H1 (cell line): ENCODE measurements at regions of chr16 and their contacts with region 1.

Region 1: DNA sequence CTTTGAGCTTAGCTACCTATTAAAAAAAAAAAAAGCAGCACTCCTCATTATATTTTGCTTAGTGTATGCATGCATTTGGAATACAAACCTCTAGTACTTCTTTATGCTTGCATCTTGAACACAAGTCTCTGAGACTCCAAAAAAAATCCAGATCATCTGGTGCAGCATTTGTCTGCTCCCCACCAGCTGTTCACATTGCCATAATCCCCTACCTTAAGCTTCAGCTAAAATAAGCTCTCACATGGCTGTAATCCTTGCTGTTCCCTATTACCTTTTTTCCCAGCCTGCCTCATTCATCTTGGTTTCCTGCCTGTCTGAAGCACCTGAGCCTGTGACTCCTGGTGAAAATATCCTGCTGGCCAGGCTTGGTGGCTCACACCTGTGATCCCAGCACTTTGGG is 7.5 kb upstream of the NFATC2IP start:
- DNase-seq: no peak
- H3K4me3 ChIP-seq: no peak overlapping the region
- H3K27ac ChIP-seq: no peak overlapping the region
- H3K4me1 ChIP-seq: peaks cover 0 to 5% (median 1%) of the 10 kb centered on the region in 4 experiments; a peak in 3 of 7 replicates
- H3K27me3 ChIP-seq: no peaks in the 10 kb centered on the region
- CTCF ChIP-seq: no peak
- EP300 ChIP-seq: no peak
- POLR2A ChIP-seq: no peak
- RAD21 ChIP-seq: no peak

Region 2: GRCh38 chr16:28846080-28846932 is 97.0 kb before region 1 on chr16 and contains the start of gene TUFM:
- CTCF ChIA-PET with region 1: interaction called, 16 read pairs
- POLR2A ChIA-PET with region 1: interaction called, 4 read pairs
- DNase-seq: peak; percentile 95 to 98
- H3K4me3 ChIP-seq: peak within 1 kb of the TSS; percentile 87 to 99 (median 98)
- H3K27ac ChIP-seq: peak within 1 kb of the TSS; percentile 70; the same call in 1 of the 2 replicates
- H3K4me1 ChIP-seq: peaks cover 0 to 7% (median 3%) of the 10 kb centered on the region in 4 experiments; a peak in 5 of 7 replicates
- H3K27me3 ChIP-seq: no peaks in the 10 kb centered on the region
- CTCF ChIP-seq: peak; percentile 83 to 93 (median 86)
- EP300 ChIP-seq: peak in 1 of 2 experiments; percentile 88; a peak in 2 of 3 replicates
- POLR2A ChIP-seq: no peak; a peak in 1 of 3 replicates
- RAD21 ChIP-seq: peak; percentile 32 to 36; a peak in 3 of 4 replicates
- total RNA-seq, gene TUFM: 243 and 249 TPM in 2 replicates

Region 3: GRCh38 chr16:28873536-28874201 is 69.6 kb before region 1 on chr16:
- CTCF ChIA-PET with region 1: interaction called, 42 read pairs
- POLR2A ChIA-PET with region 1: interaction called, 17 read pairs
- DNase-seq: peak in 1 of 2 experiments; percentile 87
- H3K4me3 ChIP-seq: no peak overlapping the region
- H3K27ac ChIP-seq: no peak overlapping the region
- H3K4me1 ChIP-seq: peaks cover 0 to 17% (median 12%) of the 10 kb centered on the region in 4 experiments; a peak in 6 of 7 replicates
- H3K27me3 ChIP-seq: no peaks in the 10 kb centered on the region
- CTCF ChIP-seq: peak; percentile 80 to 87 (median 83)
- EP300 ChIP-seq: peak in 1 of 2 experiments; percentile 65; a peak in 1 of 3 replicates
- POLR2A ChIP-seq: no peak
- RAD21 ChIP-seq: peak; percentile 55 to 67

Region 4: GRCh38 chr16:28924732-28925385 is 18.4 kb before region 1 on chr16 and contains the start of gene RABEP2:
- CTCF ChIA-PET with region 1: interaction called, 31 read pairs
- POLR2A ChIA-PET with region 1: interaction called, 4 read pairs
- DNase-seq: peak; percentile 95 to 100
- H3K4me3 ChIP-seq: peak within 1 kb of the TSS; percentile 74 to 84 (median 79)
- H3K27ac ChIP-seq: peak within 1 kb of the TSS; percentile 90
- H3K4me1 ChIP-seq: peaks cover 0 to 6% (median 0%) of the 10 kb centered on the region in 4 experiments; a peak in 3 of 7 replicates
- H3K27me3 ChIP-seq: no peaks in the 10 kb centered on the region
- CTCF ChIP-seq: no peak
- EP300 ChIP-seq: no peak
- POLR2A ChIP-seq: no peak
- RAD21 ChIP-seq: no peak
- total RNA-seq, gene RABEP2: 13.3 and 14.9 TPM in 2 replicates

Region 5: DNA sequence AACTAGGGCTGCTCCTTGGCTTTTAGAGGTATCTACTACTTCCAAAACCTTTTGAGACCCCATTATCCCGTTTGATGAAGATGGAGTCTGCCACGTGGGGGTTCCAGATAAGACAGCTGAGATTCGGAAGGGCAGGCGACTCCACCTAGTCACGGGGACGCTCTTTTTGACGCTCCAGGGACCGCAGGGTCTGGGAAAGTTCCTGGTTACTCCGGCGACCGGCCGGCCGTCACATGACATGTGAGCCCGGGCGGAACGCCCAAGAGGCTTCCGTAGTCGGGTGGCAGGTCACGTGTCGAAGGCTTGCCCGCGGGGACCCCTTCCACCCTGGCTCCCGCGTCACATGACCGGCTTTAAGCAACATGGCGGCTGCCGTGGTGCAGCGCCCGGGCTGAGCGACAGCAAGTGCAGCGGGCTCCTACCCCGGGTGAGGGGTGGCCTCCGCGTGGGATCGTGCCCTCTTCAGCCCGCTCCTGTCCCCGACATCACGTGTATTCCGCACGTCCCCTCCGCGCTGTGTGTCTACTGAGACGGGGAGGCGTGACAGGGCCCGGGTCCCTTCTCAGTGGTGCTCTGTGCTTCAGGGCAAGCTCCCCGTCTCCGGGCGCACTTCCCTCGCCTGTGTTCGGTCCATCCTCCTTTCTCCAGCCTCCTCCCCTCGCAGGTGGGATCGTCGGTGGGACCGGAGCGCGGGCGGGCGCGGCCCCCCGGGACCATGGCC is 31.3 kb after region 1 on chr16 and contains the start of gene SPNS1:
- CTCF ChIA-PET with region 1: interaction called, 18 read pairs
- POLR2A ChIA-PET with region 1: interaction called, 9 read pairs
- DNase-seq: peak; percentile 93 to 95
- H3K4me3 ChIP-seq: peak within 1 kb of the TSS; percentile 80 to 96 (median 87)
- H3K27ac ChIP-seq: peak within 1 kb of the TSS; percentile 55; the same call in 1 of the 2 replicates
- H3K4me1 ChIP-seq: peaks cover 0 to 7% (median 3%) of the 10 kb centered on the region in 4 experiments; a peak in 5 of 7 replicates
- H3K27me3 ChIP-seq: no peaks in the 10 kb centered on the region
- CTCF ChIP-seq: no peak
- EP300 ChIP-seq: 0 out of 3 replicates have a peak, but pooled peaks of 1 of the 2 experiments have one; percentile 69
- POLR2A ChIP-seq: peak in 1 of 2 experiments; percentile 82; a peak in 2 of 3 replicates
- RAD21 ChIP-seq: no peak
- total RNA-seq, gene SPNS1: 48.8 and 49.7 TPM in 2 replicates

Region 6: DNA sequence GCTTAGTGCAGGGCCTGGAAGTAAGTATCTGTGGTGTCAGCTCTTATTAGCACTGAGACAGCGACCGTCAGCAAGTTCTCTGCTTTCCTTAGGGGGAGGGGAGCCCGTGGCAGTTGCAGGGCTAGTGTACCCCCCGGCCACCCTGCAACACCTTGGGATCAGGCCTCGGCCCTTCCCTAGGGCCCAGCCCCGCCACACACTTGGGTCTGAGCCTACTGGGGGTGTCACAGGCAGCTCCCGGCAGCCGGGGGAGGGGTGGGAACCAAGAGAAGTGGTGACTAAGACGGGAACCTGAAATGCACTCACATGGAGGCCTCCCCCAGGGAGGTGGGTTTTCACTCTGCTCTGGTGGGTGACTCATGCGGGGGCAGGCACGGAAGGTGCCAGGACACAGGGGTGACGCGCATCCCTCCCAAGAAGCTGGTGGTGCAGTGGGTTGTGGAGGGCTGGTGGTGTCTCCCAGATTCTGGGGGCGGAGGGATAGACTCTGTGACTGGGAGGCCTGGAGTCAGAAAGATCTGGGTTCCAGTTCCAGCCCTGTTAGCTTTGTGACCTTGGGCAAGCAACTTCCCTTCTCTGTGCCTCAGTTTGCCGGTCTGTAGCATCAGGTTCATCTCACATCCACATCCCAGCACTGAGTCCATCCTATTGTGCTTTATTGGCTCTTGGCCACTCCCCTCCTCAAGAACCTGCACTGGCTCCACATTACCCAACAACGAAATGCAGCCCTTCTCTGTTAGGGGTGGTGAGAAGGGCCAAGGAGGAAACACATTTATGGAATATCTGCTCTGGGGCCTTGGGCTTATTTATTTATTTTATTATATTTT is 86.1 kb after region 1 on chr16:
- CTCF ChIA-PET with region 1: no interaction called
- POLR2A ChIA-PET with region 1: no interaction called
- DNase-seq: peak; percentile 23 to 58
- H3K4me3 ChIP-seq: peak overlapping the region in 1 of 4 experiments; percentile 11; a peak in 1 of 8 replicates
- H3K27ac ChIP-seq: no peak overlapping the region
- H3K4me1 ChIP-seq: peaks cover 0 to 10% (median 5%) of the 10 kb centered on the region in 4 experiments; a peak in 6 of 7 replicates
- H3K27me3 ChIP-seq: no peaks in the 10 kb centered on the region
- CTCF ChIP-seq: no peak
- EP300 ChIP-seq: no peak
- POLR2A ChIP-seq: no peak
- RAD21 ChIP-seq: no peak